CD4-positive, alpha-beta memory T cell (primary cell): ENCODE measurements at regions of chr19 and their contacts with region 1.

Region 1: DNA sequence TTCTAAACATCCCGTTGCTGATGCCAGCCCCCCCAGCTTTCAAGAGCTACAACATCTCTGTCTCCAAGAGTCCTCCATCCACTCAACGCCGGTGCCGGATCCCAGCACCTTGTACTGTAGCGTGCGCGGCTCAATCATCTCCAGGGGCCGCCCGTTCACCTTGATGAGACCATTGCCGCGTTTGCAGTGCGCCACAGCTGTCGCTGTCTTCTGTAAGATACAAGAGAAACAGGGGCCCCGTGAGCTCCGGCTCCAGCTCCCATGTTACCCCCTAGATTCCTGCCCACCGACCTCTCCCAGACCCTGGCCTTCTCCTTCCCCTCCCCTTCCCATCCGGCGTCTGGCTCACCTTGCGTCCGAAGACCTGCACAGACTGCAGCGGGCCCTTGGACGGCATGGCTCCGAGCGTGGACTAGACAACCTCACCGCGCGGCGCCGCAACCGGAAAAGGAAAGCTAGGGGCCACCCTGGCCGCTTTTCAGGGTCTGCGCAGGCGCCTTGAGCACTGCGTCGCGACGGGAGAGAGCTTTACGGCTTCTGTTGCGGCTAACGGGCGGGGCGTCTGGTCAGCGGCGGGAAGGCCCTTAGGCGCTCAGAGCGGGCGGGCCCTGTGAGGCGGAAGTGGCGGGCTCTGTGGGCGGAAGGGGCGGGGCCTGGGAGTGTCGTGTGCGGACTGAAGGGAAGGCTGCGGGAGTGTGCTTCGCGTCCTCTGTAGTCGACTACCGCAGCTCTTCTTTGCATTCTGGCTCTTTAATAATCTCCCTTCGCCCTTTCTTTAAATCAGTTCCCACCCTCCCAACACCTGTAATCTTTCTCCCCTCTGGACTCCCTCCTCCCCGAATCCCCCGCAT is at the start of gene RPS16:
- DNase-seq: peak; percentile 98 to 99 (median 99)
- H3K4me3 ChIP-seq: peak within 1 kb of the TSS; percentile 71 to 90
- H3K4me3 Mint-ChIP-seq: peak within 1 kb of the TSS; percentile 97 to 100 (median 100)
- H3K27ac ChIP-seq: peak within 1 kb of the TSS; percentile 90
- H3K27ac Mint-ChIP-seq: peak within 1 kb of the TSS; percentile 98 to 100 (median 99)
- H3K4me1 ChIP-seq: peaks cover 37% of the 10 kb centered on the region
- H3K4me1 Mint-ChIP-seq: peaks cover 31 to 62% (median 41%) of the 10 kb centered on the region in 4 donors
- H3K27me3 ChIP-seq: no peaks in the 10 kb centered on the region
- H3K27me3 Mint-ChIP-seq: peaks cover 0 to 1% of the 10 kb centered on the region in 2 donors
- total RNA-seq, gene RPS16: 4,061 to 4,227 TPM

Region 2: DNA sequence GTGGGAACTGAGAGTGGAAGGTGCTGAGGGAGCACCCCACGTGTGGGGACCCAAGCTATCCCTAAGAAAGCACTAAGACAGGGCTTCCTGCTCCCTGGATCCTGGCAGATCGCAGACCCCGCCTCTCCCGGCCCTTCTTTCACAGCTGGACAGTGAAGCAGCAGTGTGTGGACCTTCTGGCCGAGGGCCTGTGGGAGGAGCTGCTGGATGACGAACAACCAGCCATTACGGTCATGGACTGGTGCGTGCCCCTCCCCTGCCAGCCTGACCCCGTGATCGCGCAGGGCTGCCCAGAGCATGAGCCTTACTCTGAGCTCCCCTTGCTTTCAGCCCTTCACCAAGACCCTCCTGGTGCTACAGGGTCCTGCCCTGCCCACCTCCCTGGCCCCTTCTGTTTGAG is 236.7 kb before region 1 on chr19:
- CTCF ChIA-PET with region 1: no interaction called
- POLR2A ChIA-PET with region 1: no interaction called
- intact Hi-C with region 1: no loop called
- DNase-seq: no peak
- H3K4me3 ChIP-seq: no peak overlapping the region
- H3K4me3 Mint-ChIP-seq: no peak overlapping the region
- H3K27ac ChIP-seq: no peak overlapping the region
- H3K27ac Mint-ChIP-seq: no peak overlapping the region
- H3K4me1 ChIP-seq: peaks cover 24% of the 10 kb centered on the region
- H3K4me1 Mint-ChIP-seq: peaks cover 14 to 32% (median 22%) of the 10 kb centered on the region in 4 donors
- H3K27me3 ChIP-seq: peaks cover 19% of the 10 kb centered on the region
- H3K27me3 Mint-ChIP-seq: peaks cover 38 to 49% of the 10 kb centered on the region in 2 donors

Region 3: GRCh38 chr19:39335168-39335548 is 100.6 kb before region 1 on chr19:
- CTCF ChIA-PET with region 1: interaction called, 3 read pairs
- POLR2A ChIA-PET with region 1: interaction called, 14 read pairs
- intact Hi-C with region 1: no loop called
- DNase-seq: peak in 3 of 5 donors; percentile 30 to 59 (median 39)
- H3K4me3 ChIP-seq: peak overlapping the region; percentile 67 to 99
- H3K4me3 Mint-ChIP-seq: peak overlapping the region; percentile 97 to 100 (median 98)
- H3K27ac ChIP-seq: peak overlapping the region; percentile 88
- H3K27ac Mint-ChIP-seq: peak overlapping the region; percentile 96 to 100 (median 99)
- H3K4me1 ChIP-seq: peaks cover 74% of the 10 kb centered on the region
- H3K4me1 Mint-ChIP-seq: peaks cover 31 to 74% (median 54%) of the 10 kb centered on the region in 4 donors
- H3K27me3 ChIP-seq: no peaks in the 10 kb centered on the region
- H3K27me3 Mint-ChIP-seq: no peaks in the 10 kb centered on the region

Region 4: GRCh38 chr19:39390755-39391592 is 44.8 kb before region 1 on chr19 and contains the starts of genes MED29 and PAF1:
- CTCF ChIA-PET with region 1: interaction called, 6 read pairs
- POLR2A ChIA-PET with region 1: interaction called, 89 read pairs
- intact Hi-C with region 1: loop called (anchors 1 kb)
- DNase-seq: peak; percentile 96 to 99 (median 99)
- H3K4me3 ChIP-seq: peak within 1 kb of the TSS; percentile 71 to 93
- H3K4me3 Mint-ChIP-seq: peak within 1 kb of the TSS; percentile 90 to 99 (median 98)
- H3K27ac ChIP-seq: peak within 1 kb of the TSS; percentile 99
- H3K27ac Mint-ChIP-seq: peak within 1 kb of the TSS; percentile 93 to 100 (median 100)
- H3K4me1 ChIP-seq: peaks cover 26% of the 10 kb centered on the region
- H3K4me1 Mint-ChIP-seq: peaks cover 22 to 46% (median 33%) of the 10 kb centered on the region in 4 donors
- H3K27me3 ChIP-seq: no peaks in the 10 kb centered on the region
- H3K27me3 Mint-ChIP-seq: no peaks in the 10 kb centered on the region
- total RNA-seq, gene MED29: 43.1 to 51.3 TPM
- total RNA-seq, gene PAF1: 49.2 to 53.8 TPM

Region 5: GRCh38 chr19:39406656-39407393 is 28.9 kb before region 1 on chr19 and contains the start of gene ZFP36:
- CTCF ChIA-PET with region 1: interaction called, 15 read pairs
- POLR2A ChIA-PET with region 1: interaction called, 53 read pairs
- intact Hi-C with region 1: loop called (anchors 1 kb)
- DNase-seq: peak; percentile 86 to 88 (median 87)
- H3K4me3 ChIP-seq: peak within 1 kb of the TSS; percentile 97 to 100
- H3K4me3 Mint-ChIP-seq: peak within 1 kb of the TSS; percentile 88 to 99 (median 97)
- H3K27ac ChIP-seq: peak within 1 kb of the TSS; percentile 100
- H3K27ac Mint-ChIP-seq: peak within 1 kb of the TSS; percentile 99 to 100 (median 100)
- H3K4me1 ChIP-seq: peaks cover 66% of the 10 kb centered on the region
- H3K4me1 Mint-ChIP-seq: peaks cover 38 to 95% (median 55%) of the 10 kb centered on the region in 4 donors
- H3K27me3 ChIP-seq: no peaks in the 10 kb centered on the region
- H3K27me3 Mint-ChIP-seq: peaks cover 0 to 2% of the 10 kb centered on the region in 2 donors
- total RNA-seq, gene ZFP36: 151 to 152 TPM

Region 6: DNA sequence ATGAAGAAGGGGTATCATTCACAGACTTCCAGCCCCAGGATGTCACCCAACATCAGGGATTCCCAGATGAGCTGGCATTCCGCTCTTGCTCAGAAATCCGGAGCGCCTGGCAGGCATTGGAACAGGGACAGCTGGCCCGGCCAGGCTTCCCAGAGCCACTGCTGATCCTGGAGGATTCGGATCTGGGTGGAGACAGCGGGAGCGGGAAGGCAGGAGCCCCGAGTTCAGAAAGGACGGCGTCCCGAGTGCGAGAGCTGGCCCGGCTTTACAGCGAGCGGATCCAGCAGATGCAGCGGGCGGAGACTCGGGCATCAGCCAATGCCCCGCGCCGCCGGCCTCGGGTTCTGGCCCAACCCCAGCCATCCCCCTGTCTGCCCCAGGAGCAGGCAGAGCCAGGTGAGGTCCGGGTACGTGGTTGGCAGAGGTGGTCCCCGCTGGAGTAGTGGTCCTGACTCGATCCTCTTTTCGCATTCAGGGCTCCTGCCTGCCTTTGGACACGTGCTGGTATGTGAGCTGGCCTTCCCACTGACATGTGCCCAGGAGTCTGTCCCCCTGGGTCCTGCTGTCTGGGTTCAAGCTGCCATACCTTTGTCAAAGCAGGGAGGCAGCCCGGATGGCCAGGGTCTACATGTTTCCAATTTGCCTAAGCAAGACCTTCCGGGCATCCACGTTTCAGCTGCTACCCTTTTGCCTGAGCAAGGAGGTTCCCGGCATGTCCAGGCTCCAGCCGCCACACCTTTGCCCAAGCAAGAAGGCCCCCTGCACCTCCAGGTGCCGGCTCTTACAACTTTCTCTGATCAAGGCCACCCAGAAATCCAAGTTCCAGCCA is 12.3 kb before region 1 on chr19:
- CTCF ChIA-PET with region 1: interaction called, 5 read pairs
- POLR2A ChIA-PET with region 1: interaction called, 46 read pairs
- intact Hi-C with region 1: no loop called
- DNase-seq: no peak
- H3K4me3 ChIP-seq: no peak overlapping the region
- H3K4me3 Mint-ChIP-seq: no peak overlapping the region
- H3K27ac ChIP-seq: no peak overlapping the region
- H3K27ac Mint-ChIP-seq: peak overlapping the region in 3 of 7 donors; percentile 50 to 67 (median 59)
- H3K4me1 ChIP-seq: no peaks in the 10 kb centered on the region
- H3K4me1 Mint-ChIP-seq: peaks cover 0 to 9% (median 0%) of the 10 kb centered on the region in 4 donors
- H3K27me3 ChIP-seq: no peaks in the 10 kb centered on the region
- H3K27me3 Mint-ChIP-seq: no peaks in the 10 kb centered on the region

Region 7: GRCh38 chr19:39532233-39533002 is 96.7 kb after region 1 on chr19 and contains the start of gene EID2B:
- CTCF ChIA-PET with region 1: interaction called, 56 read pairs
- POLR2A ChIA-PET with region 1: interaction called, 14 read pairs
- intact Hi-C with region 1: loop called (anchors 1 kb)
- DNase-seq: peak; percentile 92 to 95 (median 94)
- H3K4me3 ChIP-seq: peak within 1 kb of the TSS; percentile 19 to 92
- H3K4me3 Mint-ChIP-seq: peak within 1 kb of the TSS; percentile 91 to 96 (median 94)
- H3K27ac ChIP-seq: peak within 1 kb of the TSS; percentile 83
- H3K27ac Mint-ChIP-seq: peak within 1 kb of the TSS; percentile 81 to 95 (median 92)
- H3K4me1 ChIP-seq: peaks cover 20% of the 10 kb centered on the region
- H3K4me1 Mint-ChIP-seq: peaks cover 14 to 43% (median 28%) of the 10 kb centered on the region in 4 donors
- H3K27me3 ChIP-seq: no peaks in the 10 kb centered on the region
- H3K27me3 Mint-ChIP-seq: no peaks in the 10 kb centered on the region
- total RNA-seq, gene EID2B: 7.7 to 8.8 TPM

Region 8: GRCh38 chr19:39671738-39672363 is 236.1 kb after region 1 on chr19:
- CTCF ChIA-PET with region 1: interaction called, 46 read pairs
- POLR2A ChIA-PET with region 1: interaction called, 5 read pairs
- intact Hi-C with region 1: loop called (anchors 1 kb)
- DNase-seq: peak; percentile 50 to 60 (median 59)
- H3K4me3 ChIP-seq: no peak overlapping the region
- H3K4me3 Mint-ChIP-seq: peak overlapping the region in 3 of 8 donors; percentile 5 to 20 (median 17)
- H3K27ac ChIP-seq: no peak overlapping the region
- H3K27ac Mint-ChIP-seq: peak overlapping the region in 1 of 7 donors; percentile 9
- H3K4me1 ChIP-seq: peaks cover 24% of the 10 kb centered on the region
- H3K4me1 Mint-ChIP-seq: peaks cover 5 to 33% (median 19%) of the 10 kb centered on the region in 4 donors
- H3K27me3 ChIP-seq: no peaks in the 10 kb centered on the region
- H3K27me3 Mint-ChIP-seq: peaks cover 6 to 10% of the 10 kb centered on the region in 2 donors